Mammary epithelial cell (primary cell): ENCODE measurements at regions of chr5 and their contacts with region 1.

Region 1: DNA sequence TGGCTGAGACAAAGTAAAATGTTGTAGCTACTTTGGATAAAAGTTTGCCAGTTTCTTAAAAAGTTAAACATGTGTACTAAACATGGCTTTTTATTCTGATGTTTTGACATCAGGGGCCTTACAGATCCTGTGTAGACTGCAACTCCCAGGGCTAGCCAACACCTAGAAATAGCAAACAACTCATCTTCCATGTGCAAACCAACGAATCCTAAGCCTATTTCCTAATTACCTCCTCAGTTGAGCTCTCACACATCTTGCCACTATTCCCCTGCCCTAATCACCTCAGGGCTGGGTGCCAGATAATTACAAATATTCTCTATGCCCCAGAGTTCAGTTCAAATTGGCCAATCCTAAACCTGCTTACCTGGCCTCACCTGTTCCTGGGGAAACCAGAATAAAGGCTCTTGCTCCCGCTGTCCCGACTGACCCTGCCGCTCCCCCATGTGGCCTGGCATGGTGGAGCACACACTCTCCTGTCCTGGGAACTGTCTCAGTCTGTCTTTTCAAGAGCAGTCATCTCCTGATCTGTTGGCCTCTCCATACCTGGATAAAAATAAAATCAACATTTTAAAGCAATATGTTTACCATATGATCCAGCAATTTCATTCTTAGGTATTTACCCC is 37.1 kb upstream of the FAM169A start:
- DNase-seq: peak; percentile 81
- H3K4me3 ChIP-seq: no peak overlapping the region
- H3K27ac ChIP-seq: no peak overlapping the region
- H3K4me1 ChIP-seq: peaks cover 6% of the 10 kb centered on the region
- H3K27me3 ChIP-seq: no peaks in the 10 kb centered on the region
- CTCF ChIP-seq: peak; percentile 89 to 97

Region 2: GRCh38 chr5:74673011-74673790 is 230.1 kb before region 1 on chr5:
- CTCF ChIA-PET with region 1: no interaction called
- dilution Hi-C with region 1: no loop called
- in situ Hi-C with region 1: no loop called
- intact Hi-C with region 1: loop called (anchors 1 kb)
- DNase-seq: no peak
- H3K4me3 ChIP-seq: no peak overlapping the region
- H3K27ac ChIP-seq: no peak overlapping the region
- H3K4me1 ChIP-seq: peaks cover 7% of the 10 kb centered on the region
- H3K27me3 ChIP-seq: no peaks in the 10 kb centered on the region
- CTCF ChIP-seq: peak in 1 of 2 donors; percentile 57

Region 3: GRCh38 chr5:74717596-74717995 is 185.7 kb before region 1 on chr5:
- CTCF ChIA-PET with region 1: no interaction called
- dilution Hi-C with region 1: no loop called
- in situ Hi-C with region 1: no loop called
- intact Hi-C with region 1: loop called (anchors 1 kb)
- DNase-seq: no peak
- H3K4me3 ChIP-seq: no peak overlapping the region
- H3K27ac ChIP-seq: no peak overlapping the region
- H3K4me1 ChIP-seq: no peaks in the 10 kb centered on the region
- H3K27me3 ChIP-seq: no peaks in the 10 kb centered on the region
- CTCF ChIP-seq: no peak

Region 4: DNA sequence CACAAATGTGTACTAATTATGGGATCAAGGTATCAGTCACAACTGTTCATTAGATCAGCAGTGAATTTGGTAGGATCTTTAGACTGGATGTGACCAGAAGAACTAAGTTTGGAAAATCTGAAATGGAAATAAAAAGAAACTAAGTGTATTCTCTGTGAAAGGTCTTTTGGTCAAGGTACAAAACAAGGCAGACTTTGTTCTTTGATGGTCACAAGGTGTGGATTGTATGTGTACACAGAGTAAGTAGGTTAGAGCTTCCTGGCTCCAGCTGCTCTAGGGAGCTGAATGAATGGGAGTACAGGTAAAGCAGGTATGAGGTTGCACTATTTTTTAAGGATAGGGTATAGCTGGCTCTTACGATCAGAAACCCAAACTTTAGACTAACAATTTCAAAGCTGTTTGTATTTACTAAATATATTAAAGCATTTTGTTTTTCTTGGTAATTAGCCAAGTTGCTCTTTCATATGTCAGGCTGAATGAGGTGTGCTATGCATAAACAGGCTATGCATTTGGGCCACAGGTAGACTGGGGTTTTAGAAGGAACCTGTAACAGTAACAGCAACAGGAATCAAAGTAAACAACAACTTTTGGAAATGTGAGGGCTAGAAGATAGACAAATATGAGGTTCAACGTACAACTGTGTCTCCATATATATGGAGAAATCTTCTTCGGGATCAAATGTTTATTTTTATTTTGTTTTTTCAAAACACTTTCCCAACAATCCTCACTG is 69.6 kb before region 1 on chr5:
- CTCF ChIA-PET with region 1: no interaction called
- dilution Hi-C with region 1: no loop called
- in situ Hi-C with region 1: no loop called
- intact Hi-C with region 1: loop called (anchors 2 kb)
- DNase-seq: no peak
- H3K4me3 ChIP-seq: no peak overlapping the region
- H3K27ac ChIP-seq: no peak overlapping the region
- H3K4me1 ChIP-seq: no peaks in the 10 kb centered on the region
- H3K27me3 ChIP-seq: no peaks in the 10 kb centered on the region
- CTCF ChIP-seq: no peak

Region 5: DNA sequence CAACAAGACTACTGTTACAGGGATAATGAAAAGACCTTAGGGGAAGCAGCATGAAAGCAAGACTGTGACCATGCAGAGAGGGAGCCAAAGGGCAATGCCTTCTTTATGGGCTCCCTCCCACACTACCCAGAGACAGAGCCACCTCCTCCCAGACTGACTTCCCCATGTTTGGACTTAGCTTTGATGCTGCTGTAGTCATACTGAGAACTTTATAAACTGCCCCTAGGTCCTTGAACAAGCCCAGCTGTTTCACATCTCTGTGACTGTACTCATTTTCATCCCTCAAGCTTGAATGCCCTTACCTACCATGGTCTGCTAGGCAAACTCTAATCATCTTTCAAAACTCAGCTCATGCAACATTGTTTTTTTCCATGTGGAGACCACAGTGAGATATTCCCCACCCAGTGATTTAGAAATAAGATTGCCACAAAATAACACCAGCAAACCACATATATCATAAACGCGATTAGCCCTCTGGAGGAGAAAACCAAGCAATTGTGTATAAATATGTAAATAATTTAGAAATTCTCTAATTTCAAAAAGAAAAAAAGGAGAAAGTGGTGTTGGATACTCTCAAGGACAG is 13.7 kb before region 1 on chr5:
- CTCF ChIA-PET with region 1: no interaction called
- dilution Hi-C with region 1: no loop called
- in situ Hi-C with region 1: no loop called
- intact Hi-C with region 1: no loop called
- DNase-seq: no peak
- H3K4me3 ChIP-seq: no peak overlapping the region
- H3K27ac ChIP-seq: no peak overlapping the region
- H3K4me1 ChIP-seq: no peaks in the 10 kb centered on the region
- H3K27me3 ChIP-seq: no peaks in the 10 kb centered on the region
- CTCF ChIP-seq: no peak